G401 (cell line): ENCODE measurements at regions of chr7 and their contacts with region 1.

Region 1: GRCh38 chr7:35701287-35701900 is 6.5 kb upstream of the HERPUD2 start:
- DNase-seq: no peak

Region 2: DNA sequence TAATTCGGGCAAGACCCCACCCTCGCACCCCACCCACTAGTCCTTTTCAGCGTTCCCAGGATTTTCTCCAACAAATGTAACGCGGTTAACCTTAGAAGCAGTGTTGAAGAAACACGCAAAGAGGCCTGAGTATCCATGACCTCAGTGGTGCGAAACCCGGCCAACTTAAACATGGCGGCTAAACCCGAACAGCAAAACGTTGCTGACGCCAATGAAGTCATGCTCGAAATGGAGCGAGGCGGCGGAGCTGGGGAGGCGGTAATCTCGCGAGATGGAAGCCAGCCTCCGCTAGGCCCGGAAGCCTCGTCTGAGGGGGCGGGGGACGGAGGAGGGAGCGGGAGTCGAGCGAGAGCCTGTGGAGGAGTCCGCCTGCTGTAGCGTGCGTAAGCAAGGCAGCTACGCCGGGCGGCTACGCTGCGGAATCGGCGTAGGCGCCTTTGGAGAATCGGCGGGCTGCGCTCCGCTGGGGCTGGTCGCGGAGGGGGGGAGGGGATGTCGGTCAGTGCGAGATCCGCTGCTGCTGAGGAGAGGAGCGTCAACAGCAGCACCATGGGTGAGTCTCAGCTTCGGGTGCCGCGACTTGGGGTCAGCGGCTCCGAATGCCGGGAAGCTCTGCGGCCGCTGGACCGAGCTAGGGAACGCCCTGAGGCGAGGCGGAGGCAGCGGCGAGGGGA is 99.5 kb after region 1 on chr7 and contains the start of gene SEPTIN7:
- in situ Hi-C with region 1: no loop called
- DNase-seq: peak; percentile 100
- total RNA-seq, gene SEPTIN7: 149 and 244 TPM in 2 replicates

Region 3: DNA sequence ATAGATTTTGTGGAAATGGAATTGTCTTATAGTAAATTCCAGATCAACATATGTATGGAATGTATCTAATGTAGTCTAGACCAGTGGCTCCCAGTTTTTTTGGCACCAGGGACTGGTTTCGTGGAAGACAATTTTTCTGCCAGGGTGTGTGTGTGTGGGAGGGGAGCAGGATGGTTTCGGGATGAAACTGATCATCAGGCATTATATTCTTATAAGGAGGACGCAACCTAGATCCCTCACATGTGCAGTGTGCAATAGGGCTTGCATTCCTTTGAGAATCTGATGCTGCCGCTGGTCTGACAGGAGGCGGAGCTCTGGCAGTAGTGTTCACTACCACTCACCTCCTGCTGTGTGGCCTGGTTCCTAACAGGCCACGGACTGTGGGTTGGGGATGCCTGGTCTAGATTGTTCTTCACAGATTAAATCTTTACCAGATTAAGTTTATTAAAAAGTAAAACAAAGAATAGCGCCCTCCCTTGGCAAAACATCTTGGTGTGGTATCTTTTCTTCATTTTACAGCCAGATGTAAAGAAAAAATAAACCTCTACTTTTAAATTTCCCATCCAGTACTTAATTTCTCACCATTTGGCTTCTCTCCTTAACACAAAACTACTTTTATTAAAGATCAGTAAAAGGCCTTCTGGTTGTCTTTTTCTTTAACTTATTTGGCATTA is 147.9 kb after region 1 on chr7:
- in situ Hi-C with region 1: no loop called
- DNase-seq: peak; percentile 40

Region 4: GRCh38 chr7:35909870-35910357 is 208.5 kb after region 1 on chr7:
- in situ Hi-C with region 1: loop called (anchors 10 kb)
- DNase-seq: no peak

Region 5: GRCh38 chr7:35993676-35994606 is 292.5 kb after region 1 on chr7:
- in situ Hi-C with region 1: no loop called
- DNase-seq: no peak